IMR-90 (cell line): ENCODE measurements at regions of chr5 and their contacts with region 1.

Region 1: DNA sequence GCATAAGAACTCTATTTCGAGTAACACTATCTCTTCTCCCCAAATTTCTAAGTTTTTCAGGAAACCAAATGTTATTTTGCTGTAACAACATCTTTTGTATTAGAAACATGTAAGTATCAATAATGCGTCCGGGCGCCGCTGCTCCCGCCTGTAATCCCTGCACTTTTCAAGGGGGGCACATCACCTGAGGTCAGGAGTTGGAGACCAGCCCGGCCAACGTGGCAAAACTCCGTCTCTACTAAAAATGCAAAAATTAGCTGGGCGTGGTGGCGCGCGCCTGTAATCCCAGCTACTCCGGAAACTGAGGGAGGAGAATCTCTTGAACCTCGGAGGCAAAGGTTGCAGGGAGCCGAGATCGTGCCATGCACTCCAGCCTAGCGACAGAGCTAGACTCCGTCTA is 881.1 kb upstream of the NUDT12 start:
- DNase-seq: no peak
- ATAC-seq: no peak
- H3K4me3 ChIP-seq: no peak overlapping the region
- H3K27ac ChIP-seq: no peak overlapping the region
- H3K4me1 ChIP-seq: no peaks in the 10 kb centered on the region
- H3K27me3 ChIP-seq: no peaks in the 10 kb centered on the region
- CTCF ChIP-seq: no peak
- POLR2A ChIP-seq: no peak
- RAD21 ChIP-seq: no peak

Region 2: GRCh38 chr5:103624035-103624461 is 819.7 kb before region 1 on chr5:
- CTCF ChIA-PET with region 1: no interaction called
- POLR2A ChIA-PET with region 1: no interaction called
- dilution Hi-C with region 1: no loop called
- in situ Hi-C with region 1: no loop called
- intact Hi-C with region 1: no loop called
- DNase-seq: peak; percentile 78
- ATAC-seq: peak; percentile 65
- H3K4me3 ChIP-seq: no peak overlapping the region
- H3K27ac ChIP-seq: no peak overlapping the region
- H3K4me1 ChIP-seq: no peaks in the 10 kb centered on the region
- H3K27me3 ChIP-seq: no peaks in the 10 kb centered on the region
- CTCF ChIP-seq: no peak
- POLR2A ChIP-seq: no peak
- RAD21 ChIP-seq: no peak

Region 3: DNA sequence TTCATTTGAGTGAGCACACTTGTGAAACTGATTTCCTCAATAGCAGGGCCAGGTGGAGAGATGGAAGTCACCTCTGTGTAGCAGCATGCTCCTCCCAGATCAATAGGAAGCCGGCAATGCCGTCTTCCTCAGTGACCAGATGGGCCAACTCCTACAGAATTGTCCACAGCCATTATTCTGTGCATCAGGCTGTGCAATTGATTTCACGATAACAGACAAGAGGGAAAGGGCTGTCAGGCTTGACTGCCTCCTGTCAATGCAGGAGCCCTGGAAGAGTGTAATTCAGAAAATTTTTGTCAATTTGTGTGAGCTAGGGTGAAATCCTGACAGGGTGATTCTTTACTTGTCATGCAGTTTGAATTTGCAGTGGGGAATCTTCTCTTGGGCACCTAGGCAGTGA is 42.8 kb before region 1 on chr5:
- CTCF ChIA-PET with region 1: no interaction called
- POLR2A ChIA-PET with region 1: no interaction called
- dilution Hi-C with region 1: no loop called
- in situ Hi-C with region 1: no loop called
- intact Hi-C with region 1: loop called (anchors 1 kb)
- DNase-seq: no peak
- ATAC-seq: no peak
- H3K4me3 ChIP-seq: no peak overlapping the region
- H3K27ac ChIP-seq: no peak overlapping the region
- H3K4me1 ChIP-seq: no peaks in the 10 kb centered on the region
- H3K27me3 ChIP-seq: no peaks in the 10 kb centered on the region
- CTCF ChIP-seq: no peak
- POLR2A ChIP-seq: no peak
- RAD21 ChIP-seq: no peak